Aorta (tissue), 5 donors: ENCODE measurements at regions of chr2 and their contacts with region 1.

Region 1: GRCh38 chr2:210617732-210618330 is 61.4 kb downstream of the CPS1 start:
- DNase-seq: no peak
- ATAC-seq: no peak
- H3K4me3 ChIP-seq: no peak overlapping the region
- H3K27ac ChIP-seq: no peak overlapping the region
- H3K4me1 ChIP-seq: peaks cover 0 to 5% of the 10 kb centered on the region in 2 donors
- H3K27me3 ChIP-seq: no peaks in the 10 kb centered on the region

Region 2: GRCh38 chr2:210654091-210654490 is 36.3 kb after region 1 on chr2:
- intact Hi-C with region 1: no loop called
- DNase-seq: no peak
- ATAC-seq: no peak
- H3K4me3 ChIP-seq: no peak overlapping the region
- H3K27ac ChIP-seq: no peak overlapping the region
- H3K4me1 ChIP-seq: no peaks in the 10 kb centered on the region
- H3K27me3 ChIP-seq: no peaks in the 10 kb centered on the region

Region 3: DNA sequence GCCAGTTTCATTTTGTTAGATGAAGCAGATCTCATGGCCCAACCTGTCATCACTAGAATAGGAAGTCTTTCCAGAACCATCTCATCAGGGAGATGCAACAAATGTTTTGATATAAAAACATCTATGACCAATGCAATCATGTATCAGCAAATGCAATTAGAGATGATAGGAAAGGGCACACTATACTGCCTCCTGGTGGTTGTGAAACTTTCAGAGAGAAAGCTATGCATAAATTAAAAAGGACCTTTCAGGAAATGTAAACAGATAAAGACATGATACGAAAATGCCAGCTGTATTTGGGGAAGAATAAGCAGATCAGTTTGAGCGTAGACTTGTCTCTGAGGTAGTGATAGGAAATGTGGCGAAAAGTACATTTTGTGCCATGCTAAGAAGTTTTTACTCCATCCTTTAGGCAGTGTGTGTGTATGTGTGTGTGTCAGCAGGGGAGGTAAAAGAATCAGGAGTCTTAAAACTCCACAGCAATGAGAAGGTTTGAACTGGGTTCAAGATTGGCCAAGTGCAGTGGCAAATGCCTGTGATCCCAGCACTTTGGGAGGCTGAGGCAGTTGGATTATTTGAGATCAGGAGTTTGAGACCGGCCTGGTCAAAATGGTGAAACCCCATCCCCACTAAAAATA is 417.8 kb after region 1 on chr2:
- intact Hi-C with region 1: loop called (anchors 5 kb)
- DNase-seq: no peak
- ATAC-seq: peak; percentile 36
- H3K4me3 ChIP-seq: no peak overlapping the region
- H3K27ac ChIP-seq: no peak overlapping the region
- H3K4me1 ChIP-seq: no peaks in the 10 kb centered on the region
- H3K27me3 ChIP-seq: no peaks in the 10 kb centered on the region

Region 4: DNA sequence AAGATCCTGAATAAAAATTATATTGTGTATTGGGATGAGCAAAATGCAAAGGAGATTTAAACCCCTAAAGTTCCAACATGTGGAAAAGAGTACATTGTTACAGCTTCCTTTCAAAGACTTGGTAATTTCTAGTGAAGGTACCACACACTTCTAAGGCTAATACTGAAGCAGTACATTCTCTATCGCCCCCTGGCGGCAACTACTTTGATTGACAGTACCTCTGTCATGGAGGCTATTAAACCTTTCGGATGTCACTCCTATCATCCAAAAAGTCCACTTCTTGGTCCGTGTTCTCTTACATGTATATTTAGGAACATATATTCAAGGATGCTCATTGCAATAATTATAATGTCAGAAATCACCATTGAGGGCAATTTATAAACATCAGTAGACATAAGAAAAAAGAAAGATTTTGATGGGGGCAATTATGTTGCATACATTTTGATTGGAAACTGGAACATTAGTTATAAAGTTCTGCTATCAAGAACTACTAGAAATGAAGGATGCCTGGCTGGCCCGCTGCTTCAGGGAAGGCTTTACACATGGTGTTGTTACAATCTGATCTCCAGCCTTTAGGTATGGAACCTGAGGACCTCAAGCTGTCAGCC is 540.1 kb after region 1 on chr2:
- intact Hi-C with region 1: loop called in 1 of 2 experiments (anchors 5 kb)
- DNase-seq: peak; percentile 71 to 89
- ATAC-seq: peak; percentile 83
- H3K4me3 ChIP-seq: no peak overlapping the region
- H3K27ac ChIP-seq: no peak overlapping the region
- H3K4me1 ChIP-seq: no peaks in the 10 kb centered on the region
- H3K27me3 ChIP-seq: no peaks in the 10 kb centered on the region